ENCODE measurements at regions of chr3 and their contacts with region 1.

Region 1: GRCh38 chr3:32018757-32019564 is 37.4 kb downstream of the ZNF860 start:
- DNase-seq: peak; percentile 55
- H3K4me3 ChIP-seq: no peak overlapping the region; a peak in 1 of 4 replicates
- H3K27ac ChIP-seq: no peak overlapping the region
- H3K4me1 ChIP-seq: no peaks in the 10 kb centered on the region
- H3K27me3 ChIP-seq: no peaks in the 10 kb centered on the region
- CTCF ChIP-seq: peak; percentile 73
- EP300 ChIP-seq: no peak
- RAD21 ChIP-seq: peak; percentile 81

Region 2: DNA sequence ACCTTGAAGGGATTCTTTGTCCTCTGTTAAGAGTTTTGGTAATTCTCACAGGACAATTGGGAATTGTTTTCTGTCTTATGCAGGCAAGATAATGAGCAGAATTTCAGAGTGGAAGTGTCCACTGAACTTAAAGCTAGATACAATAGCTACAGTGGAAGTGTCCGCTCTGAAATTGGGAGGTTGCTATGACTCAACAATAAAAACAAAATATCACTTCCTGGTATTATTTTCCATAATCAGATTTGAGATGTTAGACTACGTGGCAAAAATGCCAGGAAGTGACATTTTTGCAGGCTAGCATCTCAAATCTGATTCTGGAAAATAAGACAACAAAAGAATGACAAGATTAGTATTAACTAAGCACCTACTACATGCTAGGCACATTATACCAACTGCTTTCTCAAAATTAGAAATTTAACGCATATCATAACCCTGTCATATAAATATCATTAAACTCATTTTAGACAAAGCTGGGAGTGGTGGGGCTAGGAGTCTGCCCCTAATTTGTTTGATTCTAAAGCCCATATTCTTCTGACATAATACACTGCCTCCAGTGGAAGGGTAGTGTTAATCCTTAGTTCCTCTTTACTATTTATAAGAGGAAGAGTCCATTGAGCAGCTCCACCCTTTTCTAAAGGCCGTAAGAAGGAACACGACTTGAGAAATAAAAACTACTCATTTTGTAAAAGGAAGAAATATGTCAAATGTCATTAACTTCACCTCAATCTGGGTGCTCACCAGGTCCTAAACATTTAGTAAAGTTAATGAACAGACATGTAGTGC is 753.1 kb before region 1 on chr3:
- CTCF ChIA-PET with region 1: no interaction called
- POLR2A ChIA-PET with region 1: no interaction called
- DNase-seq: no peak
- H3K4me3 ChIP-seq: no peak overlapping the region
- H3K27ac ChIP-seq: no peak overlapping the region
- H3K4me1 ChIP-seq: no peaks in the 10 kb centered on the region
- H3K27me3 ChIP-seq: no peaks in the 10 kb centered on the region
- CTCF ChIP-seq: no peak
- EP300 ChIP-seq: no peak
- RAD21 ChIP-seq: no peak

Region 3: GRCh38 chr3:31985831-31986230 is 33.1 kb before region 1 on chr3:
- CTCF ChIA-PET with region 1: interaction called, 20 read pairs
- POLR2A ChIA-PET with region 1: no interaction called
- DNase-seq: no peak
- H3K4me3 ChIP-seq: no peak overlapping the region
- H3K27ac ChIP-seq: no peak overlapping the region
- H3K4me1 ChIP-seq: peaks cover 0 to 2% of the 10 kb centered on the region in 2 experiments; a peak in 1 of 4 replicates
- H3K27me3 ChIP-seq: no peaks in the 10 kb centered on the region
- CTCF ChIP-seq: no peak
- EP300 ChIP-seq: no peak
- RAD21 ChIP-seq: no peak

Region 4: DNA sequence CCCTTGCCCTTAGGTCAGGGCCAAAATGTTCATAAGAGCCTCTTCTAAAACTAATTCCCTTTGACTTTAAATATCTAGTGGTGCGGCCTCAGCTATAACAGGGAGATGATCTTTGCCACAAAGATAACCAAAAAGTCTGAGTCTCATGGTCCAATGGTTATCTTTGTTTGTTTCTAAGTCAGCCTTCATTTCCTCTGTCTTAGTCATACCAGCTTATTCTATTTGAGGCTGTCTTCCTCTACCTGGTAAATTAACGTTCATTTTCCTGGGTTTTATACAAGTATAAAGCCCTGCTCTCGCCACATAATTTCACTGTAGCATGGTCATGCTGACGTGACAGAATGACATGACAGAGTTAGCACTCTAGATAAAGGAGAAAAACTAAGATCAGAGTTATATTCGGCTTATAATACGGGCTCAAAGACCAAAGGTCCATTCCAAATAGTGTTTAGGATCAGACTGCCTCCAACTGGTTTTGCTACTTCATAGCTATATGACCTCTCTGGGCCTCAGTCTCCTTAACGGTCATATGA is 19.0 kb before region 1 on chr3:
- CTCF ChIA-PET with region 1: interaction called, 18 read pairs
- POLR2A ChIA-PET with region 1: no interaction called
- DNase-seq: no peak
- H3K4me3 ChIP-seq: no peak overlapping the region
- H3K27ac ChIP-seq: no peak overlapping the region
- H3K4me1 ChIP-seq: no peaks in the 10 kb centered on the region; a peak in 1 of 4 replicates
- H3K27me3 ChIP-seq: no peaks in the 10 kb centered on the region
- CTCF ChIP-seq: no peak
- EP300 ChIP-seq: no peak
- RAD21 ChIP-seq: no peak

Region 5: GRCh38 chr3:32037929-32038267 is 18.9 kb after region 1 on chr3:
- CTCF ChIA-PET with region 1: interaction called, 21 read pairs
- POLR2A ChIA-PET with region 1: no interaction called
- DNase-seq: no peak
- H3K4me3 ChIP-seq: no peak overlapping the region
- H3K27ac ChIP-seq: no peak overlapping the region
- H3K4me1 ChIP-seq: no peaks in the 10 kb centered on the region; a peak in 1 of 4 replicates
- H3K27me3 ChIP-seq: no peaks in the 10 kb centered on the region
- CTCF ChIP-seq: no peak
- EP300 ChIP-seq: no peak
- RAD21 ChIP-seq: no peak

Region 6: GRCh38 chr3:32138545-32139104 is 119.7 kb after region 1 on chr3:
- CTCF ChIA-PET with region 1: interaction called, 82 read pairs
- POLR2A ChIA-PET with region 1: no interaction called
- DNase-seq: peak; percentile 34
- H3K4me3 ChIP-seq: no peak overlapping the region
- H3K27ac ChIP-seq: peak overlapping the region in 1 of 2 experiments; percentile 67; a peak in 2 of 4 replicates
- H3K4me1 ChIP-seq: peaks cover 0 to 19% of the 10 kb centered on the region in 2 experiments; a peak in 2 of 4 replicates
- H3K27me3 ChIP-seq: no peaks in the 10 kb centered on the region
- CTCF ChIP-seq: no peak
- EP300 ChIP-seq: no peak
- RAD21 ChIP-seq: no peak

Region 7: GRCh38 chr3:32143849-32144757 is 125.1 kb after region 1 on chr3:
- CTCF ChIA-PET with region 1: interaction called, 82 read pairs
- POLR2A ChIA-PET with region 1: no interaction called
- DNase-seq: peak; percentile 66
- H3K4me3 ChIP-seq: no peak overlapping the region
- H3K27ac ChIP-seq: no peak overlapping the region
- H3K4me1 ChIP-seq: no peaks in the 10 kb centered on the region
- H3K27me3 ChIP-seq: no peaks in the 10 kb centered on the region
- CTCF ChIP-seq: peak; percentile 81
- EP300 ChIP-seq: peak in 1 of 2 experiments; percentile 17; a peak in 1 of 4 replicates
- RAD21 ChIP-seq: peak; percentile 85

Region 8: DNA sequence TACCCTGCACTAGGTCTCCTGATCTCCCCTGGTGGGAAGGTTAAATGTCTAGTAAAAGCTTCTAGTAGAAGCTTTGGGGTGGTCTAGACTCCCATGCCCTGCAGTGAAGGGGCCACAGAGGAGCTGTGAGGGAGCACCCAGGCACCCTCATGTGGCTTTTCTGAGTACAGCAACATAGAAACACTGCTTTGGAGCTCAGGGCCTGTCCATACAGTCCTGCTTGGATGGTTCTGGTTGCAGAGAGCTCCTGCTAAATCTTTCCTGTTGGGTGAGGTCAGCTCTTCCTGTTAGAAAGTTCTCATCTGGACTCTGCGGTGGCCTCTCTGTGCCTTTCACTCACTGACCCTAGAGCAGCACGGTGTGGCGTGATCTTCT is 135.2 kb after region 1 on chr3:
- CTCF ChIA-PET with region 1: interaction called, 15 read pairs
- POLR2A ChIA-PET with region 1: no interaction called
- DNase-seq: no peak
- H3K4me3 ChIP-seq: no peak overlapping the region
- H3K27ac ChIP-seq: no peak overlapping the region
- H3K4me1 ChIP-seq: no peaks in the 10 kb centered on the region
- H3K27me3 ChIP-seq: no peaks in the 10 kb centered on the region
- CTCF ChIP-seq: peak; percentile 14; the same call in 1 of the 2 replicates
- EP300 ChIP-seq: no peak
- RAD21 ChIP-seq: no peak

Measured in SK-N-SH (cell line).